Breast epithelium (tissue), 4 donors: ENCODE measurements at regions of chr5 and their contacts with region 1.

Region 1: DNA sequence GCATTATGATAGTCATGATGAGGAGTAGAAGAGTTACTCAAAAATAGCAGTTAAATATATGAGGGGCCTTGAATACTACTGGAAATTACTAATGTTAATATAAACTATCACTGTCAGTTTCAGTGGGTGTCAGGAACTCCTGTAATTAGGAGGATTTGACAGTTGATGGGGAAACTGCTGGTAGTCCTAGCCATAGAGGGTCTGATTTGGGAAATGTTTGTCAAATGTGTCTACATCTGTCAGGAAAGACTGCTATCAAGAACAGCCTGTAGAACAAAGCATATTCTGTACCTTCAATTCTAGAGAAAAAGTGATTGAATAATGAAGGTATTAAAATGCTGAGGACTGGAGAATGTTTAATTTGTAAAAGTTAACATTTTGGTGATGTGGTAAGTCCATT is 567.9 kb downstream of the CDH9 start:
- DNase-seq: no peak
- H3K4me3 ChIP-seq: no peak overlapping the region
- H3K27ac ChIP-seq: no peak overlapping the region
- H3K4me1 ChIP-seq: no peaks in the 10 kb centered on the region
- H3K27me3 ChIP-seq: no peaks in the 10 kb centered on the region
- CTCF ChIP-seq: no peak
- POLR2A ChIP-seq: no peak

Region 2: DNA sequence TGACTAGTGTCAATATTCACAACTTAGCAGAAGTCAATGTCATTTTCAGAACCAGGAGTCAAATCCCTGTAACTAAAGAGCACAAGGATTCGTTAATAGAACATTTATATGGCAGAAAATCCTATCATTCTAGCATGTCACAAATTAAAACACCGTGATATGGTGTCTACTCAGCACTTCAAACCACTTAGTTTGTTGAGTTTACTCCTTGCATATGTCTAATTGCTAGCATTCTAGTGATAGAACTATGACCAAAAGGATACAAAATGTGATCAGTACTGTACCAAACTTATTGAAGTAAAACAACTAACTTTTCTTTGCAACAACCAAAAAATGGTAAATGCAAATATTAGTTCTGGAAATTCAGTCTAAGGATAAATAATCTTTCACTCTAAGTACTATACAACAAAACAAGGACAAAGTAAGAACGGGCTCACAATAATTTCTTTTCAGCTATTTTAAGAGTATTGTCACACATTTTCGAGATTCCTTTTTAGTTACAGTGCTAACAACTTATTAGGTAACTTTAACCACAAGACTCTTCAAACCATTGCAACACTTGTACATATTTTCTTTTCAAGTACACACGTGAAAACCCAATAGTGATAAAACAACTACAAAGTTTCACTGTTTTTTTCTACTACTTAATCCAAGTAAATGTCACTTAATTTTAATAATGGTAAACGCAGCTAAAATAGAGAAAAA is 980.5 kb before region 1 on chr5:
- intact Hi-C with region 1: no loop called
- DNase-seq: no peak
- H3K4me3 ChIP-seq: no peak overlapping the region
- H3K27ac ChIP-seq: no peak overlapping the region
- H3K4me1 ChIP-seq: no peaks in the 10 kb centered on the region
- H3K27me3 ChIP-seq: no peaks in the 10 kb centered on the region
- CTCF ChIP-seq: no peak
- POLR2A ChIP-seq: no peak

Region 3: DNA sequence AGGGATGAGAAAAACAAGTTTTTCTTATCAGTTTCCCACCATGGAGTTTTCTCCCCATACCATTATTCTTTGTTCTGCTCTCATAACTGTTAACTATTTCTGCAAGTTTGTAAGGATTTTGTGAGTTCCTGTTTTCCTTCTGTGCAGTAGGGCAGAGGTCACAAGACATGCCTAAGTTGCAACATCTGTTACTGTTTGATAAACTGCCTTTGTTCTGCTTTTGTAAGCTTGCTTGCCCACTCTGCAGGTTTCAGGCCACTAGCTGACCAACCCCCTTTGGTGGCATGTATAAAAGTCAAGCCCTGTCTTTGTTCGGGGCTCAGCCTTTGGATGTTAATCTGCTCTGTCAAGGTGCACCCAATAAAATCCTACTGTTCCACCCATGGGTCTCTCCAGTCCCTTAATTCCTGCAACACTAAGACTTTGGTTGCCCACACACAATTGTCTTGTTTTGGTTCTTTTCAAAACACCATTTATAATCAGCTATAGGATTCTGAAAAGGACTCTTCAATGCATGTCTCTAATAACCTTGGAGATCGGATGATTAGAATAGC is 22.5 kb after region 1 on chr5:
- intact Hi-C with region 1: loop called (anchors 1 kb)
- DNase-seq: no peak
- H3K4me3 ChIP-seq: no peak overlapping the region
- H3K27ac ChIP-seq: no peak overlapping the region
- H3K4me1 ChIP-seq: no peaks in the 10 kb centered on the region
- H3K27me3 ChIP-seq: no peaks in the 10 kb centered on the region
- CTCF ChIP-seq: no peak
- POLR2A ChIP-seq: no peak